ENCODE measurements at regions of chr12 and their contacts with region 1.

Region 1: DNA sequence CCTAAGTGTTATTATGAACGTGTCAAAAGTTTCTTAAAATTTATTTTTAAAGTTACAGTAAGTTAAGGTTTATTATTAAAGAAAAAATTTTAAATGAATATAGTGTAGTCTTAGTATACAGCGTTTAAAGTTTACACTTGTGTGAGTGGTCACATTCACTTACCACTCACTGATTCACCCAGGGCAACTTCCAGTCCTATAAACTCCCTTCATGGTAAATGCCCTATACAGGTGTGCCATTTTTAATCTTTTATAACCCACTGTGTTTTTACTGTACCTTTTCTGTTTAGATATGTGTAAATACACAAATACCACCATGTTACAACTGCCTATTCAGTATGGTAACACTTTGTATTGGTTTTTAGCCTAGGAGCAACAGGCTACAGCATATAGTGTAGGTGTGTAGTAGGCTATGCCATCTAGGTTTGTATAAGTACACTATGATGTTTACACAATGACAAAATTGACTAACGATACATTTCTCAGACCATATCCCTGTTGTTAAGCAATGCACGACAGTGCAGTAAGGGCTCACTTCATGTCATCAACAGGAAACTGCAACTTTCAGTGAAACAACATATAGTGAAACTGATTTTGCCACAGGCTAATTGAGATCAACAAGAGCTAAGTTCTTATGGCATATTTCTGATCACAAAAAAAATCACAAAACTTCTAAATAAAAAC is 112.0 kb upstream of the TMCC3 start:
- DNase-seq: no peak
- ATAC-seq: peak; percentile 54
- H3K4me3 Mint-ChIP-seq: no peak overlapping the region
- H3K27ac Mint-ChIP-seq: no peak overlapping the region
- H3K4me1 Mint-ChIP-seq: peaks cover 5% of the 10 kb centered on the region
- H3K27me3 Mint-ChIP-seq: no peaks in the 10 kb centered on the region

Region 2: DNA sequence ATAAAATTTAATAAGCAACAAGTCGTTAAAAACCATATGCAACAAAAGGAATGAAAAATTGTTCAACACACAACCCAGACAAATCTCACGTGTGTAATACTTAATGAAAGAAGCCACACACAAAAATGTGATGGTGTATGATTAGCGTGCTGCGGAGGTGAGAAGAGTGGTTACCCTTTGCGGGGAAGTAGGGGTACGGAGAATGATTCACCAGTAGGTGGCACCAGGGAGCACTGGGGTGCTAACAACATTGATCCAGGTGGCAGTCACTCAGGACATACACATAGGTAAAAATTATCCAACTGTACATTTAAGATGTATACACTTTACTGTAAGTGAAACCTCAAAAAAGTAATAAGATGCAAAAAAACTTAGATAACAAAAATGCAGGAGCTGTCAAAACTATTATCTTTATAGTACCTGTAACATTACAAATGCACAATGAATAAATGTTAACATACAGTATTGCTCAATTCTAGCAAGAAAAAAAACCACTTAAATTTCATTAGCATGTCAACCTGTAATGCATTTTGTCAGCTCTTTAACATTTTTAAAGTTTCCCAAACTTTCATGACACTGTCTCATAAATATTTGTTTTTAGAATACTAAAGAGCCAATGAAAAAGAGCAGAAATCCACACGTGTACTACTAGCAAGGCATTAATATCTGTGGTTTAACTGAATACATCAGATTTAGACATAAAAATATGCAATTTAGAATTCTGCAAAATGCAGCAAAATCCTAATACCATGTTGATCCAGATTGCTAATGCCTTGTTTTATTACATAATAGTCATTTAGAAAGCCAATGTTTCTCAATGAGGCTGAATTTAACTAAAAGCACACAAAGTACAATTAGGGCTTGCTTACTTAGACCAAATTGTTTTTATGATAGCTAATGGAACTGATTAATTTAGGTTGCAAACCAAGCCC is 158.7 kb before region 1 on chr12:
- CTCF ChIA-PET with region 1: no interaction called
- POLR2A ChIA-PET with region 1: no interaction called
- intact Hi-C with region 1: loop called (anchors 2 to 5 kb)
- DNase-seq: peak; percentile 76
- ATAC-seq: peak; percentile 55
- H3K4me3 Mint-ChIP-seq: no peak overlapping the region
- H3K27ac Mint-ChIP-seq: no peak overlapping the region
- H3K4me1 Mint-ChIP-seq: no peaks in the 10 kb centered on the region
- H3K27me3 Mint-ChIP-seq: peaks cover 16% of the 10 kb centered on the region

Region 3: DNA sequence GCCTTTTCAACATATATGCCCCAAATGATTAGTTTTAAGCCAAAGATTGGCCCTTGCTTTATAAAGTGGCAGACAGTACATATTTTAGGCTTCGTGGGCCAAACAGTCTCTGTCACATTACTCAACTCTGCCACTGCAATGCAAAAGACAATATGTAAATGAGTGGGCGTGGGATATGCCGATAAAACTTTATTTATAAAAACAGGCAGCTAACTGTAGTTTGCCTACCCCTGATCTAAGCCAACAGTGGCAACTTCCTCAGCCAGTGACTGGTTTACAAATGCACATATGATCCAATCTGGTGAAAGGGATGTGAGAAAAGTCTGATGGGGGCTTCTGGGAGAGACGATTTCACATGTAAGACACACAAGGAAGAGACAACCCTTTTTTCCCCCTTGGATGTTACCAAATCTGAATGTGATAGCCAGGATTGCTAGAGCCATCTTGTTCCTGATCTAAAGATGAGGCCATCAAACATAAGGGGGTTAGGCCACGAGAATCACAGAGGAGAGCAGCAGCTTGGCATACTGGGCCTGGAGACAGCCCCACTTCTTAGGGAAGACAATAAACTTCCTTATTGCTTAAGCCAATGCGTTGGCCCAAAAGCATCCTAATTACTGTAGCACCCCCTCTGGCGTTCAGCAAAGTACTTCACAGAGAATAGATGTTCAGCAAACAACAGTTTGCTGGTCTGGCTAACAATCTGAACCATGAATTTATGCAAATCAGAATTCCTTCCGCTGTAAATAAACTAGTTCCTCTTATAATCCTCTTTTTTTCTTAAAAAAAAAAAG is 36.8 kb before region 1 on chr12:
- CTCF ChIA-PET with region 1: no interaction called
- POLR2A ChIA-PET with region 1: no interaction called
- intact Hi-C with region 1: no loop called
- DNase-seq: no peak
- ATAC-seq: no peak
- H3K4me3 Mint-ChIP-seq: no peak overlapping the region
- H3K27ac Mint-ChIP-seq: no peak overlapping the region
- H3K4me1 Mint-ChIP-seq: no peaks in the 10 kb centered on the region
- H3K27me3 Mint-ChIP-seq: peaks cover 5% of the 10 kb centered on the region